ENCODE measurements at regions of chr18 and their contacts with region 1.

Region 1: DNA sequence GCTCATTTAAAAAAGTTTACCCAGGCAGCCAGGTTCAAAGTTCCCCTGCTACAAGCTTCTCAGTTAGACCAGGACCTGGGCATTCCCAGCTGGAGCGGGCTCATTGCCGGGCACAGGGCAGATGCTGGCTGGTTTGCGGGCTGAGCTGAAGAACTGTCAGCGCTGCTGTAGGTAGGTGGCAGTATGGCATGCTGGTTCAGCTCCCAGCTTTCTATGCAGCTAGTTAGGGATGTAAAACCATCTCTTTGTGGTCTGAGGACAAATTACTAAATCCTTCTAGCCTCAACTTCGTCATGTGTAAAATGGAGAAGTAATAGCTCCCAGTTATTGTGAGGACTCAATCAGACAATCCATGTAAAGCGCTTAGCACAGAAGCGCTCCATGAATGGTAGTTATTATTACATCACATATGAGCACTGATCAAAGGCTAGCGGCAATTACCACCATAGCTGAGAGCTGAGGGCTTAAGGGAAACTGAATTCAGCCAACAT is 2.4 kb upstream of the LDLRAD4 start:
- DNase-seq: peak; percentile 77
- H3K4me3 Mint-ChIP-seq: peak overlapping the region; percentile 67
- H3K27ac Mint-ChIP-seq: no peak overlapping the region
- H3K4me1 Mint-ChIP-seq: peaks cover 19% of the 10 kb centered on the region
- H3K27me3 Mint-ChIP-seq: peaks cover 40% of the 10 kb centered on the region

Region 2: GRCh38 chr18:12973562-12974213 is 242.4 kb before region 1 on chr18:
- CTCF ChIA-PET with region 1: no interaction called
- POLR2A ChIA-PET with region 1: no interaction called
- intact Hi-C with region 1: no loop called
- DNase-seq: no peak
- H3K4me3 Mint-ChIP-seq: no peak overlapping the region
- H3K27ac Mint-ChIP-seq: no peak overlapping the region
- H3K4me1 Mint-ChIP-seq: peaks cover 2% of the 10 kb centered on the region
- H3K27me3 Mint-ChIP-seq: no peaks in the 10 kb centered on the region

Region 3: DNA sequence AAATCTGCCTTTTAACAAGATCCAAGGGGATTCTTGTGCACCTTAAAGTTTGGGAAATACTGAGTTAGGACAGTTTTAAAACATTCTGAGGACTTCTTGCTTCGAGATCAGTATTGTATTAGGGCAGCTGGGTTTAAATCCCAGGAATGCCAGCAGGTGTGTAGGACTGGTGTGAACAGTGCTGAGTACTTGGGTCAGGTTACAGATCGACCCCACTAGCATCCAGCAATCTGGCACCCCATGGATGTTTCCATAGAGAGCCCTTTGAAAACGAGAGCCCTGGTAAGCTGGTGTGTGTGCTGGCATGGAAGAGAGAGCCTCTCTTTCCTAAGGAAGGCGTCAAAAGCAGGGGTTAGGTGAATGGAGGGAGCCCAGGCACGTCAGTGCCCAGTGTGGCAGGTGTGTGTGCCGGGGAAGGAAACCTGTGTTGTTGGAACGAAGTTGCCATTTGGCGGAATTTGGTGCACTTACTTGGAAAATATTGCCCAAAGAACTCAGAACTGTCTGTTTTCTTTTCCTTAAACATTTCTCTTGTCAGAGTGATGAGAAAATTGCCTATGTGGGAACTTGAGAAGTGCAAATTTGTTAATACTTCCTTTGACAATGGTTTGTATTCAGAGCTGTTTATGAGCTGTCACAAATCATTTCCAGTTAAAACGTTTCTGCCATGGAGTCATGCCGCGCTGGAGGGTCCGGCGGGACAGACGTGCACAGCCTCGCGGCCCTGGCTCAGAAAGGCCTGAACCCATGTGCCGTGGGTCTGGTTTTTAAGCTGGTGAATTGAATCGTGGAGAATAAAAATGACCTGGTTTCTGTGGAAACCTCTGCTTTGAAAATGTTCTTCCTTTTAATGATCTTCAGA is 40.5 kb after region 1 on chr18:
- CTCF ChIA-PET with region 1: no interaction called
- POLR2A ChIA-PET with region 1: no interaction called
- intact Hi-C with region 1: no loop called
- DNase-seq: peak; percentile 2
- H3K4me3 Mint-ChIP-seq: no peak overlapping the region
- H3K27ac Mint-ChIP-seq: no peak overlapping the region
- H3K4me1 Mint-ChIP-seq: peaks cover 20% of the 10 kb centered on the region
- H3K27me3 Mint-ChIP-seq: peaks cover 1% of the 10 kb centered on the region

Region 4: DNA sequence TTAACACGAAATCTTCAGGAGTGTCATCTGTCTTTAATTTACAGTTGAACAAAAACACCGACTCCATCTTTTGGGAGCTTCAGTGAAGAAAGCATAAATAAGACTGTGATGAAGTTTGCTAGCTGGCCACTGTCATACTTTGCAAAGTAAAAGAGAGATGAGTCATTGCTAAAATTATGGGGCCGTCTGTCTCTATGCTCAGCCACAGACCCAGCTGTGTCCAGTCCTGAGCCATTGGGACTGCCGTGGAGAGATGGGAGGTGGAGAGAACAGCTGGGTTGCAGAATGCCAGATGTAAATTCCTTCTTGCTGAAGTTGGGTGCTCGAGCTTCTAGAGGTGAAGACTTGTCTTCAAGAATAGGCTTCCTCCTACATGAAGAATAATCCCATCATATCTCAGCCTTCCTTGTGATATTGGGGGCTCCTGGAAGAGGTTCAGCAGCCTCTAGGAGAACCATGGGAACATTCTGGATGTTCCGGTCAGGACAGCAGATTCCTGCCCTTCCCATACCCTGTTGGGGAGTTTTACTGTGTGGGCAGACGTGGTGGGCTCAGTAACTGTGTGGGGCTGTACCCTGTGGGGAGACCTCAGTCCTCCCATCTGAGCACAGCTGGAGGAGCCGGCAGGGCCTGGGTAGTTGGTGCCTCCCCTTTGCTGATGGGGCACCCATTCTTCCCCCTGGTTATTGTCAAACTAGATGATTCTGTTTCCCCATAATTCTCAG is 73.5 kb after region 1 on chr18:
- CTCF ChIA-PET with region 1: interaction called, 7 read pairs
- POLR2A ChIA-PET with region 1: interaction called, 5 read pairs
- intact Hi-C with region 1: loop called (anchors 1 kb)
- DNase-seq: no peak
- H3K4me3 Mint-ChIP-seq: no peak overlapping the region
- H3K27ac Mint-ChIP-seq: peak overlapping the region; percentile 82
- H3K4me1 Mint-ChIP-seq: peaks cover 47% of the 10 kb centered on the region
- H3K27me3 Mint-ChIP-seq: peaks cover 8% of the 10 kb centered on the region

Region 5: GRCh38 chr18:13435596-13436327 is 219.6 kb after region 1 on chr18:
- CTCF ChIA-PET with region 1: interaction called, 13 read pairs
- POLR2A ChIA-PET with region 1: no interaction called
- intact Hi-C with region 1: loop called (anchors 1 kb)
- DNase-seq: peak; percentile 22
- H3K4me3 Mint-ChIP-seq: no peak overlapping the region
- H3K27ac Mint-ChIP-seq: no peak overlapping the region
- H3K4me1 Mint-ChIP-seq: peaks cover 58% of the 10 kb centered on the region
- H3K27me3 Mint-ChIP-seq: no peaks in the 10 kb centered on the region

Region 6: DNA sequence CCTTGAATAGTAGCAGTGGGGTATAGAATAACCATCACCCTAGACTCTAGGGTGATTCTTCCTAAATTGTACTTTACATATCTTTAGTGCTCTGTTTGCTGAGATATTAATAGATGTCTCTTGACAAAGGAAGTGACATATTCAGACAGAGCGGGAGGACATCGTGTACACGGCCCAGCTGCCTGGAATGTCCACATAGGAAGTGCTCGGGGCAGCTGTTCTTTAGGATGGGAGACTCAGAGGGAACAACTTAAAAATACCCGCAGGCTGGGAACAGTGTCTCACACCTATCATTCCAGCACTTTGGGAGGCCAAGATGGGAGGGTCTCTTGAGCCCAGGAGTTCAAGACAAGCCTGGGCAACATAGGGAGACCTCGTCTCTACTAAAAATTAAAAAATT is 304.2 kb after region 1 on chr18:
- CTCF ChIA-PET with region 1: interaction called, 11 read pairs
- POLR2A ChIA-PET with region 1: no interaction called
- intact Hi-C with region 1: no loop called
- DNase-seq: no peak
- H3K4me3 Mint-ChIP-seq: no peak overlapping the region
- H3K27ac Mint-ChIP-seq: no peak overlapping the region
- H3K4me1 Mint-ChIP-seq: peaks cover 3% of the 10 kb centered on the region
- H3K27me3 Mint-ChIP-seq: no peaks in the 10 kb centered on the region

Region 7: DNA sequence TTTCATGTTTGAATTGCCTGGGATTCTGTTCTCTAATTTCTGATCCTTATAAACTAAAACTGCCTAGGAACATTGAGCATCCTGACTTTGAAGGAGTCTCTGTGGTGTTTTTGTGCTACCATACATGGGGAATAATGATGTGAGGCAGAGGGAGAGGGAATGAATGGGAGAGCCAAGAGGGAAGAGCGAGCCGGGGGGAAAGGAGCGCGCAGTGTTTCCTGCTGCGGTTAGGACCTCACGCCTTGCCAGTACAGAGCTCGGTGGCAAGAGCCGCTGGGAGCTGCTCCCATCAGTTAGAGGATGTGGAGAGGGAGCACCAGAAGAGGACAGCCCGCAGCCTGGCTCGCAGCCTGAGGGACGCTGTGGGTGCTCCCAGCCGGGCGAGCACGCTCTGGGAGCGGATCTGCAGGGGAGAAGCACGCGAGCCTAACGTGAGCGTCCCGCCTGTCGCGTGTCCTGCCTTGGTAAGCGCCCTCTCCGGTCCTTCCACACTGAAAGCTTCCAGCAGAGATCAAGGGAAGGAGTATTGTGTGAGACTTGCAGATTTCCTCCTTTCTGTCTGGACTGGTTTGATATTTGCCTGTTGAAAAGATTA is 395.6 kb after region 1 on chr18:
- CTCF ChIA-PET with region 1: interaction called, 6 read pairs
- POLR2A ChIA-PET with region 1: interaction called, 4 read pairs
- intact Hi-C with region 1: loop called (anchors 5 kb)
- DNase-seq: peak; percentile 26
- H3K4me3 Mint-ChIP-seq: peak overlapping the region; percentile 78
- H3K27ac Mint-ChIP-seq: peak overlapping the region; percentile 92
- H3K4me1 Mint-ChIP-seq: peaks cover 87% of the 10 kb centered on the region
- H3K27me3 Mint-ChIP-seq: no peaks in the 10 kb centered on the region

Region 8: DNA sequence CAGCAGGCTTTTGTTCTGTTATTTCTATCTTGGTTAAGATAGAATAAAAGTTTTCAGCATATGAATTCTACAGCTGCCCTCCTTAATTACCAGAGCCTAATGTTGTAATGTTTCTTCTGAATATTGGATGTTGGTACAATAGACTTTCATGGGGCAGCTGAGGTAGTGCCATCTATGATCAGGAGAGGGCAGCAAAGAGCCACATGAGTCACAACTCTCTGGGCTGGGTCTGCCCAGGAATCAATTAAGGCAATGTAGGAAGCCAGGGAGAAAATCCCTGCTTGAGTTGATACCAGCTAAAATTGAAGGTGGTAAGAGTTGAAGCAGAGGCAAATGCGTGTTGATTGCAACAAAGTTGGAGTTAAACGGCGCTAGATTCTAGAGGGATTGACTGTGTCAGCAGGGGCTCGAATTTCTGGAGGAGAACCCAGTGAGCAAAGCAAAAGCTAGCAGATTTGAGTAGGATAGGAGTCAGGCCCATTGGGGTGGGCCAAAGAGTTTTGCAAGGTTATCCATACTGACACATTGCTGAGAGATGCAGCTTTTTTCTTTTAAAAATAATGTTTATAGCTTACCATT is 597.2 kb after region 1 on chr18:
- CTCF ChIA-PET with region 1: no interaction called
- POLR2A ChIA-PET with region 1: no interaction called
- intact Hi-C with region 1: loop called (anchors 5 kb)
- DNase-seq: peak; percentile 69
- H3K4me3 Mint-ChIP-seq: no peak overlapping the region
- H3K27ac Mint-ChIP-seq: no peak overlapping the region
- H3K4me1 Mint-ChIP-seq: no peaks in the 10 kb centered on the region
- H3K27me3 Mint-ChIP-seq: no peaks in the 10 kb centered on the region

Measured in activated CD4-positive, alpha-beta memory T cell treated with anti-CD3 and anti-CD28 coated beads for 36 hours (primary cell).